Colonic mucosa (tissue), 4 donors: ENCODE measurements at regions of chr15 and their contacts with region 1.

Region 1: DNA sequence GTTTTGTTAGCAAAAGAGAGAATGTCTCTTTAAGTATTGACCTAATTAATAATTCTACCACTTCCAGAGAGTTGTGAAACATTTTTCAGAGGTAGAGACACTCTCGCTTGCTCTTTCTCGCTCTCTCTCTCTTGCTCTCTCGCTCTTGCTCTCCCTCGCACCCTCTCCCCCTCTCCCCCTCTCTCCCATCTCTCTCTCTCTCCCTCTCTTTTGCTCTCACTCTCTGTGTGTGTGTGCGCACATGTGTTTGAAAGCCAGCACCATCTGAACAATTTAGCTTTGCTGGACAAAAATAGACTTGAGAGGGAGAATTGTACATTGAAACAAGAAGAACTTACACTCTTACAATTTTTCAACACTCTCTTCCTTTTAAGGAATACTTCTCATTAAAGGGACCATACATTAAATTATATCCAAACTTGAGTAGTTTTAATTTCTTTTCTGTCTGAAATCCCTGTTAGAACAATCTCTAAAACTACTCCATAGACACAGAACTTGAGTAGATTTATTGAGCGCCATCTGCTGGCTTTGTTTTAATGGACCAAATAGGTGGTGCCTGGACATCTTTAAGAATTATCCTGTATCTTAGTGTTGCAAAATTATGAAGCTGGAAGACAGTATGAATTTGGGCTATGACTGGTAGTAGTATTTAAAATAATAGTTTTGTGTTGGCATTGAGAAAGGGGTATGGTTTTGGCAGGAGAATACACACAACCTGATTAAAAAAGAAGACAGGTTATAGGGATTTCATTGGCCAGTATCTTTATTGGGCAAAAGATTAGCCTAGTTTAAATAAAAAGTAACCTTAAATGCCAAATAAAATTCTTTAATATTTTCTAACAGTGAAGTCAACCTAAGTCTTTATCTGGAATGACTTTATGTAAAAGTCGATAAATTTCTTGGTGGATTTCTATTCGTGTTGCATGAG is 124.6 kb downstream of the AKAP13 start:
- DNase-seq: peak; percentile 72
- H3K4me3 ChIP-seq: no peak overlapping the region
- H3K27ac ChIP-seq: no peak overlapping the region
- H3K4me1 ChIP-seq: no peaks in the 10 kb centered on the region
- H3K27me3 ChIP-seq: no peaks in the 10 kb centered on the region
- CTCF ChIP-seq: peak; percentile 50

Region 2: GRCh38 chr15:85296615-85297402 is 208.2 kb before region 1 on chr15:
- intact Hi-C with region 1: loop called (anchors 5 kb)
- DNase-seq: peak; percentile 86
- H3K4me3 ChIP-seq: peak overlapping the region; percentile 23
- H3K27ac ChIP-seq: no peak overlapping the region
- H3K4me1 ChIP-seq: peaks cover 6% of the 10 kb centered on the region
- H3K27me3 ChIP-seq: no peaks in the 10 kb centered on the region
- CTCF ChIP-seq: peak; percentile 64

Region 3: DNA sequence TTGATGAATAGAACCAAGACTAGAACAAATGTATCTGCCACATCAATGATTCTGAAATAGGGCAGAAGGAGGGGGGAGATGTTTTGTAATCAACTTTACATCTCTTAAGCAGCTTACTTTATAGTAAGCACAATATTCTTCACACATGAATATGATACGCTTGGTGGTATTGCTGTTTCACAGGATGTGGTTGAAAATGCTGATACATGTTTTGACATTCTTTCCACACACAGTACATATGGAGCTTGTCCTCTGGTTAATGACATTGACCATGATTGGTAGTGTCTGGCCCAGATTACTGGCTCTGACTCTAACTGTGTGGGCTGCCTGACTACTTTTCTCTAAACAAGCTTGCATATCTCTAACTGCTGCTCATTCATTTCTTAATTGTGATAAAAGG is 120.8 kb after region 1 on chr15:
- intact Hi-C with region 1: no loop called
- DNase-seq: no peak
- H3K4me3 ChIP-seq: no peak overlapping the region
- H3K27ac ChIP-seq: peak overlapping the region; percentile 48
- H3K4me1 ChIP-seq: no peaks in the 10 kb centered on the region
- H3K27me3 ChIP-seq: no peaks in the 10 kb centered on the region
- CTCF ChIP-seq: no peak